ENCODE measurements at regions of chr15 and their contacts with region 1.

Region 1: DNA sequence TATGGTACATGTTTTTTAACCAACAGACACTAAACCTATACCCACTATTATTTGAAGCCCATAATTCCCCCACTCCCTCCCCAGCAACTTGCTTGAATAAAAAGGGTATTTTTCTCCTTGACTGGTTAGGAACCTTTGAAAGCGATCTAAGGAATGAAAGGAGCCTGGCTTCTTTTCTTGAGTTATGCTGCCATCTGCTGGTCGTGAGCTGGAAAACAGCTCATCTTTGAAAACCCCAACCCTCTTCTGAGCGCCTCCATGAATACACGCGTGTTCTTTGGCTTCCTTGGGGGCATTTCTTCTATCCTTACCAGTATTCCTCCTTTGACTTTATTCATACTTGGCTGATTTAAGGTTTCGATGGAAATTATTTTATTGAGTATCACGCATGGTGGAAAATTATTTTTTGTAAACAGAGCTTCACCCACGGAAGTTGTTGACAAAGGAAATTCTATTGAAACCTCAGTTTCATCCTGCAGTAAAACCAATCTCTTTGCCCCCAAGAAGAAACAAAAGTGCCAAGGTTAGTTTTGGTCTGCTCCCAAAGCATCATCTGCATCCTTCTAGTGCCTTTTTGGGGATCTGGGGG is 171.6 kb downstream of the SV2B start:
- DNase-seq: peak; percentile 40
- ATAC-seq: peak; percentile 57 to 71

Region 2: GRCh38 chr15:91055548-91056331 is 215.9 kb before region 1 on chr15:
- intact Hi-C with region 1: loop called (anchors 1 to 5 kb)
- DNase-seq: peak; percentile 52
- ATAC-seq: peak; percentile 78 to 87

Measured in left cardiac atrium (tissue), 4 donors.